Transverse colon (tissue), 4 donors: ENCODE measurements at regions of chr7 and their contacts with region 1.

Region 1: GRCh38 chr7:70775570-70776156 is 356.3 kb upstream of the GALNT17 start:
- DNase-seq: no peak
- H3K4me3 ChIP-seq: no peak overlapping the region
- H3K27ac ChIP-seq: no peak overlapping the region
- H3K4me1 ChIP-seq: no peaks in the 10 kb centered on the region
- H3K27me3 ChIP-seq: no peaks in the 10 kb centered on the region
- CTCF ChIP-seq: peak in 3 of 5 experiments; percentile 4 to 9 (median 5)
- EP300 ChIP-seq: no peak
- POLR2A ChIP-seq: no peak

Region 2: DNA sequence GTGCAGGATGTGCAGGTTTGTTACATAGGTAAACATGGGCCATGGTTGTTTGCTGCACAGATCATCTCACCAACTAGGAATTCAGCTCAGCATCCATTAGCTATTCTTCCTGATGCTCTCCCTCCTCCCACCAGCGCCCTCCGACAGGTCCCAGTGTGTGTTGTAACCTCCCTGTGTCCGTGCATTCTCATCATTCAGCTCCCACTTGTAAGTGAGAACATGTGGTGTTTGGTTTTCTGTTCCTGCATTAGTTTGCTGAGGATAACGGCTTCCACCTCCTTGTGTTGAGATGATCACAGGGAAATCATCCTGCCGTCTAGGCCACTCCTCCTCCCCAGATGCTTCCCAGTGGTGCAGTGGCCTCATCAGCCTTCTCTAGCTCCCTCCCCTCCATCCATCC is 94.7 kb after region 1 on chr7:
- in situ Hi-C with region 1: no loop called
- intact Hi-C with region 1: no loop called
- DNase-seq: no peak
- H3K4me3 ChIP-seq: no peak overlapping the region
- H3K27ac ChIP-seq: no peak overlapping the region
- H3K4me1 ChIP-seq: no peaks in the 10 kb centered on the region
- H3K27me3 ChIP-seq: no peaks in the 10 kb centered on the region
- CTCF ChIP-seq: no peak
- EP300 ChIP-seq: no peak
- POLR2A ChIP-seq: no peak

Region 3: DNA sequence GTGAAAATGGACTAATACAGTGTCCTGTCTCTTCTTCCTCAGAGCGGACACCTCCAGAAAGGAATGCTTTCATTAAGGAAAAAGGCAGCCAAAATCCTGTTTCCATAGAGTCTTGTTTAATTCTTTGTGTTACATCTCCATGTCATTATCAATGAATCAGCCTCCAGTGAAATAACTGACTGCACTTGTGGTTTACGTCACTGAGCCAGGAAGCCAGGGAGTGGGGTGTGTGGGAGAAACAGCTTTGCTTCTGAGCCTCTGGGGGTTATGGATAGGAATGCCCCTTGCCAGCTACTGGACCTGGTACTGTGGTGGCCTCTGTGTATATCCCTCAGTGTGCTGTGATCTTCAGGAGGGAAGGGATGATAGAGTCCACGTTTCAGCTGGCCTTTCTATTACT is 773.1 kb after region 1 on chr7:
- in situ Hi-C with region 1: no loop called
- intact Hi-C with region 1: loop called (anchors 10 kb)
- DNase-seq: no peak
- H3K4me3 ChIP-seq: no peak overlapping the region
- H3K27ac ChIP-seq: no peak overlapping the region
- H3K4me1 ChIP-seq: no peaks in the 10 kb centered on the region
- H3K27me3 ChIP-seq: no peaks in the 10 kb centered on the region
- CTCF ChIP-seq: no peak
- EP300 ChIP-seq: no peak
- POLR2A ChIP-seq: no peak